ENCODE measurements at regions of chr10 and their contacts with region 1.

Region 1: DNA sequence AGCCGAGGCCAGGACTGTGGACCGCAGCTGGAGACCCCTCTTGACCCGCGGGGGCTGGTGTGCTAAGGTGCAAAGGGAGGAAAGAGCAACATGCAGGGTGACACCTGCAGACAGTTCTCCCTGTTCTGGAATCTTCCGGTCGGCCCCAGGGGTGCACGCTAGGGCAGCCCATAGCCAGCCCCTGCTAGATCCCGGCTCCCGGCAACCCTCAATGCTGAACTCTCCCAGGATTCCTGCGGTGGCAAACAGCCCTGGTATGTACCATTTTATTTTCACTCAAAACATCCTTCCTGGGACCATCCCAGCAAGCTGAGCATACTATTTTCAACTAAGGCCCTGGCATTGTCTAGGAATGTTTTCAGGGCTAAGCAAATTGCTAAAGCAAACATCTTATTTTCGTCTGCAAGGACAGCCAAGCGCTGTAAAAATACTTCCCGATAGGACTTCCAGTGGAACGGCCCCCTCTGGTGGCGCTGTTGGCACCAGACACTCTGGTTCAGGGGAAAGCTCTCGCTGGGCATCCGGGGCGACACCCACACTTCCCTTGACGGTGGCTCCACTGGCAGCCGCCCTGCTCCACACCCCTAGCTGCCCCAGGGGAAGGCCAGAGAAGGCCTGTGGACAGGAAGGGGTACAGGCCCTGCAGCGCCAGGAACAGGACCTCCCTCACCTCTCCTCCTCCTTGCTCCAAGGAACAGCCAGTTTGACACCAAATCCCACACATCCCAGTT is 99.4 kb downstream of the CTBP2 start:
- DNase-seq: peak; percentile 83 to 95 (median 90)

Region 2: GRCh38 chr10:124697830-124698544 is 363.0 kb before region 1 on chr10:
- intact Hi-C with region 1: no loop called
- DNase-seq: peak in 6 of 42 donors; percentile 20 to 59 (median 40)

Region 3: DNA sequence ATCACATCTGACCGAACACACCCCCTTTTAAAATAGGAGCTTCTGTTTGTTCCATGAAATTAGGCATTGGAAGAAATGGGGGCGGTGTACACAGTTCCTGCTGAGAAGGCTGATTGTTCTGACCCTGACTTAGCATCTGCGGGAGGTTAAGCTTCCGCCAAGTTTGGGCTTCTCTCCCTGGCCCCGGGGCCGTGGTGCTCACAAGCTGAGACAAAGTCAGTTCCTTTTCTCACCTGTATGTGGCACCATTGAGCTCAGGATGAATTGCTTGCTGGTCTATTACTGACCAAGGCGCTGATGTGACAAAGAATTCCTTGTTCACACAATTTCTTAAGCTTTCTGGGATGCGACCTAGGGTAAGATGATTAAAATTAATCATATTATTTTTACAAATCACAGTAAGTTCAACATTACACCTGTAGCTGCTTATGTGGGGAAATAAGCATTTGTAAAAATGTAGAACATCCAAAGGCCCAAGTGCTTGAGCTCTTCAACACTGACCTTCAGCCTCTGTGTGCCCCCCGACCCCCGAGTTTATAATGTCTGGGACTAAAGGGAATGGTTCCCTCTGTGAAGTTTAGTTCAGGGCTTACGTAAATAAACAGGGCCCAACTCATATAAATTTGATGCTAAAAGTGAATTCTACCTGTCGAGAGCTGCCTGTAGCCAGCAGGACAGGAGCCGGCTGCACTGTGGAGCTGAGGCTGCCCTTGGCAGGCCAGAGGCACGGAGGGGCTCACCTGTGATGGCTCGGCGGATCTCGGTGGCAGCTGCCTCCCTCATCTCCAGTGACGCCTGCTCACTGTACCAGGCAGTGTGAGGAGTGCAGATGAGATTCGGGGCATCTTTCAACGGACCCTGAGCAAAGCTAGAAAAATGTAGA is 68.3 kb before region 1 on chr10:
- intact Hi-C with region 1: loop called (anchors 2 kb)
- DNase-seq: peak in 40 of 42 donors; percentile 44 to 95 (median 80)

Region 4: GRCh38 chr10:125144693-125145623 is 84.0 kb after region 1 on chr10:
- intact Hi-C with region 1: loop called (anchors 5 kb)
- DNase-seq: peak in 38 of 42 donors; percentile 40 to 82 (median 62)

Measured in head of caudate nucleus (tissue), 42 donors.